Endothelial cell of umbilical vein (primary cell): ENCODE measurements at regions of chr3 and their contacts with region 1.

Region 1: GRCh38 chr3:151918253-151919029 is 45.0 kb downstream of the SUCNR1 start:
- DNase-seq: peak; percentile 72
- H3K4me3 ChIP-seq: no peak overlapping the region
- H3K27ac ChIP-seq: peak overlapping the region; percentile 14
- H3K4me1 ChIP-seq: peaks cover under 1% of the 10 kb centered on the region
- H3K27me3 ChIP-seq: no peaks in the 10 kb centered on the region
- CTCF ChIP-seq: peak; percentile 34 to 43
- POLR2A ChIP-seq: no peak

Region 2: GRCh38 chr3:151227807-151228665 is 690.4 kb before region 1 on chr3:
- CTCF ChIA-PET with region 1: interaction called, 5 read pairs
- POLR2A ChIA-PET with region 1: no interaction called
- dilution Hi-C with region 1: no loop called
- intact Hi-C with region 1: loop called (anchors 1 kb)
- DNase-seq: peak; percentile 79
- H3K4me3 ChIP-seq: no peak overlapping the region
- H3K27ac ChIP-seq: peak overlapping the region; percentile 40
- H3K4me1 ChIP-seq: peaks cover 11% of the 10 kb centered on the region
- H3K27me3 ChIP-seq: no peaks in the 10 kb centered on the region
- CTCF ChIP-seq: peak; percentile 87 to 88
- POLR2A ChIP-seq: no peak

Region 3: DNA sequence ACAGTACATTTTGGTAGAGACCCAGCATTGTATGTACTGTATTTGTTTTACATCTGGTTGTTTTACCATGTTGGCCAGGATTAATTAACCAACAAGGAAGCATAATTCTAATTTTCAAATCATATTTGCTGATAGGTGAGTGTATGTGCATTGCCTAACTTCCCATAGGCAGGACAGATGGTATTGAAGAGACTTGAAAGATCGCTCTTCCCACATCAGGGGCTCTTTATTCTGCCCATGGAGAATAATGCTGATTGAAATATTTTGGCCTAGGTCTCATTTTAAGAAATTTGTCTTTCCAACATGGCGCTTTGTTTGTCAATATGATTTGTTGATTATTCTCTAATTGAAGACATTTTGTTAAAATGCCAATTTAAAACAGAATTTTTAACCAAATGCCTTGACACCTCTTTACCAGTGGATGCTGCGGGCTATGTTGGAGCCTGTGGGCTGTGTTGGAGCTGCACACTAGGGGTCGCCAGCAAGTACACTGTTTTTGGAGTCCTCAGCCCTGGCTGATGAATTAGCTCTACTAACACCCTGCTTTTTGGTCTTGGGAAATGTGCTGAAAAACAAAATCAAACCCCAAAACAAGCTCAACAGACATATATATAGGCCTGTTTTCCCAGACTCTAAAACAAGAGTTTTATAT is 539.2 kb before region 1 on chr3:
- CTCF ChIA-PET with region 1: interaction called, 5 read pairs
- POLR2A ChIA-PET with region 1: no interaction called
- dilution Hi-C with region 1: no loop called
- intact Hi-C with region 1: loop called (anchors 1 kb)
- DNase-seq: peak; percentile 10
- H3K4me3 ChIP-seq: no peak overlapping the region
- H3K27ac ChIP-seq: no peak overlapping the region
- H3K4me1 ChIP-seq: no peaks in the 10 kb centered on the region
- H3K27me3 ChIP-seq: no peaks in the 10 kb centered on the region
- CTCF ChIP-seq: peak; percentile 48 to 67
- POLR2A ChIP-seq: no peak

Region 4: GRCh38 chr3:151468284-151468917 is 450.0 kb before region 1 on chr3:
- CTCF ChIA-PET with region 1: interaction called, 39 read pairs
- POLR2A ChIA-PET with region 1: no interaction called
- dilution Hi-C with region 1: no loop called
- intact Hi-C with region 1: loop called (anchors 1 kb)
- DNase-seq: peak; percentile 62
- H3K4me3 ChIP-seq: no peak overlapping the region
- H3K27ac ChIP-seq: no peak overlapping the region
- H3K4me1 ChIP-seq: no peaks in the 10 kb centered on the region
- H3K27me3 ChIP-seq: peaks cover 0 to 2% of the 10 kb centered on the region in 2 experiments
- CTCF ChIP-seq: peak; percentile 83 to 86
- POLR2A ChIP-seq: no peak

Region 5: DNA sequence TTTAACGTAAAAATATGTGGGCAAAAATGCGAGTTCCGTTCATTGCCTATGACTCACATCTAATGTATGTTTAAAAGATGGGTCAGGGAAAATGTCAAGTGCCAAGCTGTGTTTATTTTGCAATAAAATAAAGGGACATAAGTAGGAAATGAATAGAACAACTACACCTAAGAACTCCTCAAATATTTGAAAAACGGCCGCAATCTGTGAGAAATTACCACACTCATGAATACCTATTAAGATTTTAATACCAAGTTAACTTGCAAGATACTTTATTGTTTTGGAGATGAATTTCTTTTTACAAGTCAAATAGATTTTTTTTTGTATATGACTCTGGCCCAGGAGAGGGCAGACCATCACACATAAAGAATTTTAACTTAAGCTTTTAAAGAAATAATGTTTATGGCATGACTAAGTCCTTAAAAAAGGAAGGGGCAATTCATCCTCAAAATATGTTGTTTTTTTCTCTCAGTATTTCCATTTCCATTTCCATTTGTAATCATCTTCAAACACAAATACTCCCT is 107.7 kb after region 1 on chr3:
- CTCF ChIA-PET with region 1: interaction called, 3 read pairs
- POLR2A ChIA-PET with region 1: no interaction called
- dilution Hi-C with region 1: no loop called
- intact Hi-C with region 1: loop called (anchors 2 kb)
- DNase-seq: peak; percentile 95
- H3K4me3 ChIP-seq: peak overlapping the region in 1 of 3 experiments; percentile 41
- H3K27ac ChIP-seq: peak overlapping the region; percentile 89
- H3K4me1 ChIP-seq: peaks cover 41% of the 10 kb centered on the region
- H3K27me3 ChIP-seq: no peaks in the 10 kb centered on the region
- CTCF ChIP-seq: peak; percentile 16 to 19
- POLR2A ChIP-seq: peak; percentile 45